CD4-positive, alpha-beta memory T cell (primary cell): ENCODE measurements at regions of chr1 and their contacts with region 1.

Region 1: DNA sequence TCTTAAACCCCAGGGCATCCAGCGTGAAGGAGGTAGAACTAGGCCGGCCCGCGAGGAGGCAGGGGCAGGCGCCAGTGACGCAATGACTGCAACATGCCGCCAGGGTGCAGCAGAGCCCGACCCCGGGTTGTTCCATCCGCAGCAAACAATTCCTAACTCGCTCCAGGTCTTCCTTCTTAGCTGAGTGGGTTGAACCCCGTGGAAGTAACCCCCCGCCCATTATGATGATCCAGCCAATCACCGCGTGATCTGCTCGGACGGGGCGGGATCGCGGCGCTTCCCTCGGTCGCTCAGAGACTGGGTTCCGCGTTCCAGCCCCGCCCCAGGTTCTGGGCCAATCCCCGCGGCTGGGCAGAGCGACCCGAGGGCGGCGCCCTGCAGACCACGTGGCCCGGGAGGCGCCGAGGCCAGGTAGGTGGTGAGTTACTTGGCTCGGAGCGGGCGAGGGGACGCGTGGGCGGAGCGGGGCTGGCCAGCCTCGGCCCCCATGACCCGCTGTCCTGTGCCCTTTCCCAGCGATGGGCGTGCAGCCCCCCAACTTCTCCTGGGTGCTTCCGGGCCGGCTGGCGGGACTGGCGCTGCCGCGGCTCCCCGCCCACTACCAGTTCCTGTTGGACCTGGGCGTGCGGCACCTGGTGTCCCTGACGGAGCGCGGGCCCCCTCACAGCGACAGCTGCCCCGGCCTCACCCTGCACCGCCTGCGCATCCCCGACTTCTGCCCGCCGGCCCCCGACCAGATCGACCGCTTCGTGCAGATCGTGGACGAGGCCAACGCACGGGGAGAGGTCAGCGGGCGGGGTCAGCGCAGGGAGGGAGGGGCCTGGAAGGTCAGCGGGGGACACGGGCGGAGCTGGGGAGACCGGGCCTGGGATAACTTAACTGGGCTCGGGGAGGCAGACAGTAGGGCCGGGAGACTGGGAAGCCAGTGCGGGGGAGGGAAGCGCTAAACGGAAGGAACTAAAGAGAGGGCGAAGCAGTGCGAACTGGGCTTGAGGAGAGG is at the start of gene DUSP23:
- DNase-seq: peak; percentile 96 to 97 (median 97)
- H3K4me3 ChIP-seq: peak within 1 kb of the TSS; percentile 39 to 57
- H3K4me3 Mint-ChIP-seq: peak within 1 kb of the TSS; percentile 83 to 93 (median 87)
- H3K27ac ChIP-seq: peak within 1 kb of the TSS; percentile 61
- H3K27ac Mint-ChIP-seq: peak within 1 kb of the TSS; percentile 81 to 96 (median 92)
- H3K4me1 ChIP-seq: peaks cover 16% of the 10 kb centered on the region
- H3K4me1 Mint-ChIP-seq: peaks cover 14 to 55% (median 36%) of the 10 kb centered on the region in 4 donors
- H3K27me3 ChIP-seq: no peaks in the 10 kb centered on the region
- H3K27me3 Mint-ChIP-seq: no peaks in the 10 kb centered on the region
- total RNA-seq, gene DUSP23: 14.5 to 15.7 TPM

Region 2: GRCh38 chr1:159408862-159409400 is 372.0 kb before region 1 on chr1:
- CTCF ChIA-PET with region 1: no interaction called
- POLR2A ChIA-PET with region 1: no interaction called
- intact Hi-C with region 1: no loop called
- DNase-seq: no peak
- H3K4me3 ChIP-seq: no peak overlapping the region
- H3K4me3 Mint-ChIP-seq: no peak overlapping the region
- H3K27ac ChIP-seq: no peak overlapping the region
- H3K27ac Mint-ChIP-seq: no peak overlapping the region
- H3K4me1 ChIP-seq: no peaks in the 10 kb centered on the region
- H3K4me1 Mint-ChIP-seq: no peaks in the 10 kb centered on the region
- H3K27me3 ChIP-seq: no peaks in the 10 kb centered on the region
- H3K27me3 Mint-ChIP-seq: peaks cover 2% of the 10 kb centered on the region in 2 donors

Region 3: DNA sequence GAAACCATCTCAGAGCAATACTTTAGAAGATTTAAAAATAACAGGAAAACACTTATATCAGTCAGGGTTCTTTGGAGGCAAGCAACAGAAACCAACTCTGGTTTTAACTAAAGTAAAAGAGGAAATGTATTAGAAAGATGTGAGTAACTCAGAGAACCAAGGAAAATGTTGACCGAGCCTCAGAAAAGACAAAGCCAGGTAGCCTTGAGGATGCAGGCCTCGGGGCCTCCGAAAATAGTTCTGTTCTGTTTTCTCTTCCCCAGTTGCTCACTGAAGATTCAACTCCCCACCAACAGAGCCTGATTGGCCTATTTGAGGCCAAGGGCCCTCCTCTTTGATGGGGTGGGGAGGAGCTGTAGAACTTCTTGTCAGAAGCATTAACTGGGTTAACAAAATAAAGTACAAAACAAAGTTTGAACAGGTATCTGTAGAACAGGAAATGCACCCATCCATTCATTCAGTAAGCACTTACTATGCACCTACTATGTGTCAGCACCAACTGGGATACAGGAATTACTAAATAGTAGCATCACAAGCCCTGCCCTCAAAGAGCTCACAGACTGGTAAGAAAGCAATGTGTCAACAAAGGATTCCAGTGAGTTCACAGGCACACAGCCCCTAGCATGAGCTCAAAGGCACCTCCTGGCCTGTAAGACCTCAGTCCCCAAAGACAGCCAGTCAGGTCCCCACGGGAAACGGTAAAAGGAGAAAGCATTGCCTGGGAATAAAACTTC is 58.4 kb after region 1 on chr1:
- CTCF ChIA-PET with region 1: no interaction called
- POLR2A ChIA-PET with region 1: no interaction called
- intact Hi-C with region 1: no loop called
- DNase-seq: no peak
- H3K4me3 ChIP-seq: no peak overlapping the region
- H3K4me3 Mint-ChIP-seq: no peak overlapping the region
- H3K27ac ChIP-seq: no peak overlapping the region
- H3K27ac Mint-ChIP-seq: peak overlapping the region in 1 of 7 donors; percentile 17
- H3K4me1 ChIP-seq: no peaks in the 10 kb centered on the region
- H3K4me1 Mint-ChIP-seq: peaks cover 0 to 5% (median under 1%) of the 10 kb centered on the region in 4 donors
- H3K27me3 ChIP-seq: no peaks in the 10 kb centered on the region
- H3K27me3 Mint-ChIP-seq: no peaks in the 10 kb centered on the region

Region 4: DNA sequence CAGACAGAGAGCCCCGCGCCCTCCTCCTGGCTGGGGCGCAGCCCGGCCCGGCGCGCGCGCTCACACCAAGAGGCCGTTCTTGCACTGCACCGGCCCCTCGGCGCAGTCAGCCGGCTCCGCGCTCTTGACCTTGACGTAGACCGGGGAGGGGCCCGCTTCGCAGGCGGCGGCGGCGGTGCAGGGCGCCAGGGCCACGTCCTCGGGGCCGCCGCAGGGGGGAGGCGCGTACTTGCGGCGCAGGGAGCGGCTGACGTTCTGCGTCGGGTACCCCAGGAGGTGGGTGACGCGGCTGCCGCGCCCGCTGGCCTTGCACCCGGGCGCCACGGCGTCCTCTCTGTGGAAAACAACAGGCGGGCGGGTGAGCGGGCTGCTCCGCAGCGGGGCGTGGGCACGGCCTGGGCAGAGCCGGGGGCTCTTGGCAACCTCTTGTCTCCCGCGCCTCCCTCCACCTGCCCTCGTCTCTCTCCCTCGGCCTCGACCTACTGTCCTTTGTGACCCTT is 73.9 kb after region 1 on chr1:
- CTCF ChIA-PET with region 1: no interaction called
- POLR2A ChIA-PET with region 1: interaction called, 4 read pairs
- intact Hi-C with region 1: loop called (anchors 1 kb)
- DNase-seq: peak; percentile 66 to 75 (median 70)
- H3K4me3 ChIP-seq: peak overlapping the region; percentile 42 to 53
- H3K4me3 Mint-ChIP-seq: peak overlapping the region; percentile 83 to 95 (median 89)
- H3K27ac ChIP-seq: peak overlapping the region; percentile 38
- H3K27ac Mint-ChIP-seq: peak overlapping the region; percentile 33 to 93 (median 84)
- H3K4me1 ChIP-seq: peaks cover 14% of the 10 kb centered on the region
- H3K4me1 Mint-ChIP-seq: peaks cover 9 to 25% (median 14%) of the 10 kb centered on the region in 4 donors
- H3K27me3 ChIP-seq: no peaks in the 10 kb centered on the region
- H3K27me3 Mint-ChIP-seq: no peaks in the 10 kb centered on the region

Region 5: DNA sequence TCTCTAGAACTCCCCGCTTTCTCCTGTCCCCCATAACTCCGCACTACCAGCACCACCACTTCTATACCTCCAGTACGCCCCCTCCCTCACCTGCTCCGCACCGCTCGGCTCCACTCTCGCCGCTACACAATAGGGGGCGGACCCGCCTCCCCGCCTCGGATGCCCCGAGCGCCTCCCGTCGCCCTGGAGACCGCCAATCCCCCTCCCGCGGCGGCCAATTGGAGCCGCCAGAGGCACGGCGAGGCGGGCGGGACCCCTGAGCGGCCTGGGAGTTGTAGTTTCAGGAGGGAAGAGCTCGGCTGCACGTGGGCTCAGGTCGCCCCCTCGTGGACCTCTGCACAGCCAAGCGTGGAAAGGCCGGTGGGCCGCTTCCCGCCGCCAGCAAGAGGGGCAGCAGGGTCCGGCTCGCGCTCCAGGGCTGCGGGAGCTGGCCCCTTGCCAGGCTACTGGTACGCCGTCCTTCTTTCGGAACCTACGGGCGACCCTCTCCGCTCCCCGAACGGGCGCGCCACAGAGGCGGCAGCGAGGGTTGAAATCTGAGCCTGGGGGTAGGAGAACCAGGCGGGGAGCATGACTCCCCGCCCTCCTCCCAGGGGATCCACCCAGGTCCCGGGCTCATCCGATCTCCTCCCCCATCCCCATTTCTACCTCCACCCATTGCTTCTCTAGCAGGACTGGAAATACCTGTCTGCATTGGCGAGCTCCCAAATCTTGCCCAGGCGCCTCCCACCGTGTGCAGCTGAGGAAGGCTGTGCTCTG is 164.8 kb after region 1 on chr1 and contains the start of gene IGSF9:
- CTCF ChIA-PET with region 1: no interaction called
- POLR2A ChIA-PET with region 1: interaction called, 5 read pairs
- intact Hi-C with region 1: loop called (anchors 1 kb)
- DNase-seq: peak; percentile 68 to 79 (median 71)
- H3K4me3 ChIP-seq: peak within 1 kb of the TSS in 1 of 2 donors; percentile 38
- H3K4me3 Mint-ChIP-seq: peak within 1 kb of the TSS; percentile 32 to 86 (median 68)
- H3K27ac ChIP-seq: no peak within 1 kb of the TSS
- H3K27ac Mint-ChIP-seq: peak within 1 kb of the TSS in 3 of 7 donors; percentile 12 to 87 (median 65)
- H3K4me1 ChIP-seq: peaks cover 13% of the 10 kb centered on the region
- H3K4me1 Mint-ChIP-seq: peaks cover 8 to 12% (median 10%) of the 10 kb centered on the region in 4 donors
- H3K27me3 ChIP-seq: peaks cover 21% of the 10 kb centered on the region
- H3K27me3 Mint-ChIP-seq: peaks cover 25 to 35% of the 10 kb centered on the region in 2 donors
- total RNA-seq, gene IGSF9: not detected